Gastrocnemius medialis (tissue), 4 donors: ENCODE measurements at regions of chr4 and their contacts with region 1.

Region 1: GRCh38 chr4:140252742-140253555 is 99.0 kb upstream of the MAML3 start:
- DNase-seq: peak; percentile 29 to 39
- ATAC-seq: peak; percentile 66 to 72
- H3K4me3 ChIP-seq: peak overlapping the region; percentile 58 to 75 (median 66)
- H3K27ac ChIP-seq: peak overlapping the region; percentile 75 to 86 (median 80)
- H3K4me1 ChIP-seq: peaks cover 13 to 23% of the 10 kb centered on the region in 2 donors
- H3K27me3 ChIP-seq: no peaks in the 10 kb centered on the region
- CTCF ChIP-seq: peak; percentile 69 to 99 (median 87)
- POLR2A ChIP-seq: no peak

Region 2: DNA sequence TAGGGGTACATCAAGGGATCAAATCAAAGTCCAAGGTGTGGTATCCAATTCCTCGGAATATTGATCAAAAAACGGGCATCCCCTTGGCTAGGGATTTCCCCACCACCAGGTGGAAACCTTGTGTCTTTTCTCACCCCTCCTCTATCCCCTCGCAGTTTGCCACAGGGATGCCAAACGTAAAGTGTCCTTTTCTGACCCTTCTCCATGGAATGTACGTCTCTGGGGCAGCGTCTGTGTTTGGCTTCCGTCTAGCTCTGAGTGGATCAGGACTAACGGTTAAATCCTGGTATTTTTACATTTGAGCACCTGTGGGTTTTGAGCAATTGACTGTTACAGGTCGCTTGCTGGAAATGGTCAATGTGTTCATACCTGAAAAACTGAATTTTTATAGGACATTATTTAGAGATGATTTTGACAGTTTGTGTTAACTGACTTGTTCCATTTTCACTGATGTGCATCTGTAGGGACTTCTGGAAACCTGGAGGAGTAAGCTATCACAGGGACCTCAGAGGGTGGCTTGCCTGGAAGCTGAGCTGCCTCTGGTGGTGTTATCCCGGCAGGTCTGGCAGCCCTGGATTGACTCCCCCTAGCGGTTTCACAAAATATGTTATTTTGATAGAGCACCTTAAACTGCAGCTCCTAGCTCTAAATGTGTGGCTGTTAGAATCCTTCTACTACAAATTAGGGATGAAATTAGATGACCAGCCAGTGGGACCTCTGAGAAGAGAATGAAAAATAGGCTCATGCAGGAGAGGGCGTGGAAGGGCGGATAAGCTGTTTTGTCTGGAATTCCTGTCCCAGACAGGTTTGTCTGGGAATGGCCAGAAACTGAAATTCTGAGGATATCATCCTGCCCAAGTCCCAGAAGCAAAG is 596.1 kb before region 1 on chr4:
- in situ Hi-C with region 1: no loop called
- intact Hi-C with region 1: loop called (anchors 5 kb)
- DNase-seq: peak in 1 of 2 donors; percentile 28
- ATAC-seq: peak; percentile 63 to 82
- H3K4me3 ChIP-seq: no peak overlapping the region
- H3K27ac ChIP-seq: peak overlapping the region in 2 of 4 donors; percentile 36 to 58
- H3K4me1 ChIP-seq: peaks cover 9 to 15% of the 10 kb centered on the region in 2 donors
- H3K27me3 ChIP-seq: no peaks in the 10 kb centered on the region
- CTCF ChIP-seq: peak; percentile 63 to 84 (median 66)
- POLR2A ChIP-seq: no peak

Region 3: DNA sequence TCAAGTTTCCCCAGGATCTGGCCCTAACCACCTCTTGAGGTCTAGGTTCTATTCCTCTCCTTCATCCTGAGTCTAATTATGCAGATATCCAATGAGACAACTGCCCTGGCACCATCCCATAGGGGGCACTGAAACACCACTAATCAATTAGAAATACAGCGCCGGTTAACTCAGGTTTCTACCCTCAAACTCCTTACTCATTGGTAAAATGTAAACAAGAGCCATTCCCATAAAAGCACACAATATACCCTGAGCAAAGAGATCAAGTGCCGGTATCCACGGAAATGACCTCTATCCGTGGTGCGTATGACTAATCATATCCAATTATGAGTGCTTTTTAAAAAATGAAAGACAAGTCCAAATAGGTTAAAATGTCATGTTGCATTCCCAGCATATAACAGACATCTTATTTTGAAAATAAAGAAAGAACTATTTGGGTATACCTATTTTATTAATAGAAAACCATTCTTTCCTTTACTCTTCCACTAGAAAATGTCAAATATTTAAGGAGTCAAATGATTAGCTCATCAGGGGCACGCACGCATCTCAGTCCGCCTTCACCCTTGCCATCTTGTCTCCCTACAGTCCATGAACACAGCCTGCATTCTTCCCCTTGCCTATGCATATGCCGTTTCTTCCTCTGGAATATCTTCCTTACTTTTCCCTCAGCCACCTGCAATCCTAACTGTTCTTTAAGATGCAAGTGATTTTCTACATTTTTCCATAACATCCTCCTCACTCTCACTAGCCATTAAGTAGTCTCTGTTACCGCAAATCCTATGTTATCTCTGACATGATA is 240.1 kb before region 1 on chr4:
- in situ Hi-C with region 1: loop called in 3 of 4 experiments (anchors 10 to 25 kb)
- intact Hi-C with region 1: loop called (anchors 1 kb)
- DNase-seq: peak in 1 of 2 donors; percentile 49
- ATAC-seq: peak; percentile 90 to 94
- H3K4me3 ChIP-seq: no peak overlapping the region
- H3K27ac ChIP-seq: no peak overlapping the region
- H3K4me1 ChIP-seq: peaks cover 0 to 8% of the 10 kb centered on the region in 2 donors
- H3K27me3 ChIP-seq: no peaks in the 10 kb centered on the region
- CTCF ChIP-seq: peak; percentile 31 to 57 (median 49)
- POLR2A ChIP-seq: no peak

Region 4: DNA sequence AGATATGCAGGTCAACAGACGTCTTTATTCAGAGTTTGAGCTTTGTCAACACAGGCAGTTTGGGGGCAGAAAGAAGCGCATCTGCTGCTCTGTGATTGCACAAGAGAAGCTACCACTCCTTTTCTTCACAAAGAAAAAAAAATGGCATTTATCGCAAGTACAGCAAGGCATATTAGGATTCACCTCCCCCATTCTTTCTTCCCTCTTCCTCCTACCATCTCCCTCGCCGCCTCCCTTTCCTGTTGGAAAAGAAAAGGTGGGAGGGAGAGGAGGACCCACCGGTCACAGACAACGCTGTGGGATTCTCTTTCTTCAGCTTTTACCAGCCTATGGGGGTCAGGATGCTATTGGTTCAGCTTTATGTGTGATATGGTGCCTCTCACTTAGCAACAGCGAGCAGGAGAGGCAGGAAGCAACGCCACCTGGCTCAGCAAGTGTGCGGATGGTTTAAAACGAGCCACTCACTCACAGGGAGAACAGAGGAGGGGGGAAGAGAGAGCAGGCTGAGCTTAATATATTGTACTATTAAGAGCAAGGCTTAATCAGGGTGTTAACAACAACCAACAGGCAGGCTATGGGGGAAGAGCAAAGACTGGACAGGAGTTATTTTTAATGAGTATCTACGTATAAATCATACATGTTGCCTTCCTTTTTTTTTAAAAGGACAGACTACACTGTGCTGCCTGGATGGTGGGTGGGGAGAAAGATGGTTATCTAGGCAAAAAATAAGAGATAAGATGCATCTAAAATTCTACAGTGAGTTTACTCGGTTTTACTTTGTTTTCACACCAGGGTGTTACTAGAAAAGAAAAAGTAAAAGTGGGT is 203.7 kb before region 1 on chr4:
- in situ Hi-C with region 1: loop called in 1 of 4 experiments (anchors 10 kb)
- intact Hi-C with region 1: loop called (anchors 2 kb)
- DNase-seq: peak in 1 of 2 donors; percentile 17
- ATAC-seq: peak; percentile 39 to 40
- H3K4me3 ChIP-seq: peak overlapping the region; percentile 35 to 46 (median 44)
- H3K27ac ChIP-seq: peak overlapping the region; percentile 21 to 71 (median 50)
- H3K4me1 ChIP-seq: peaks cover 24 to 26% of the 10 kb centered on the region in 2 donors
- H3K27me3 ChIP-seq: no peaks in the 10 kb centered on the region
- CTCF ChIP-seq: no peak
- POLR2A ChIP-seq: no peak

Region 5: DNA sequence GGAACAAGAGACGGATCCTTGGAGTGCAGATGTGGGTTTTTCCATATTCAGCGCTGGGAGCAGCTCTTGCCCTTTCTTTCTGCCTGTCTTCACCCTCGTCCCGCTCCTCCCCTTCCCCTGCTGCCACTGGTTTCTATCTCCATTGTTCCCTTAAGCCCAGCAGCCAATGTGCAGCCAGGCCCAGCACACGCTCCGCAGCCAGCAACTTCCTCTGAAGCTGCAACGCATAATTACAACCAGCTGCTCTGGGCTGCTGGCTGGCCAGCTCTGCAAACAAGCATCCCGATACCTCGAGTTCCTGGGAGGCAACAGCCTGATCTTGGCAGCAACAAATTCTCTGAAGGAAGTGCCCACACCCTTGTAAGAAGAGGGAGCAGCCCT is 15.4 kb before region 1 on chr4:
- in situ Hi-C with region 1: no loop called
- intact Hi-C with region 1: loop called (anchors 2 kb)
- DNase-seq: peak; percentile 53 to 70
- ATAC-seq: peak; percentile 42 to 49
- H3K4me3 ChIP-seq: peak overlapping the region; percentile 25 to 45 (median 39)
- H3K27ac ChIP-seq: peak overlapping the region; percentile 84 to 90 (median 88)
- H3K4me1 ChIP-seq: peaks cover 38 to 48% of the 10 kb centered on the region in 2 donors
- H3K27me3 ChIP-seq: no peaks in the 10 kb centered on the region
- CTCF ChIP-seq: no peak
- POLR2A ChIP-seq: no peak

Region 6: DNA sequence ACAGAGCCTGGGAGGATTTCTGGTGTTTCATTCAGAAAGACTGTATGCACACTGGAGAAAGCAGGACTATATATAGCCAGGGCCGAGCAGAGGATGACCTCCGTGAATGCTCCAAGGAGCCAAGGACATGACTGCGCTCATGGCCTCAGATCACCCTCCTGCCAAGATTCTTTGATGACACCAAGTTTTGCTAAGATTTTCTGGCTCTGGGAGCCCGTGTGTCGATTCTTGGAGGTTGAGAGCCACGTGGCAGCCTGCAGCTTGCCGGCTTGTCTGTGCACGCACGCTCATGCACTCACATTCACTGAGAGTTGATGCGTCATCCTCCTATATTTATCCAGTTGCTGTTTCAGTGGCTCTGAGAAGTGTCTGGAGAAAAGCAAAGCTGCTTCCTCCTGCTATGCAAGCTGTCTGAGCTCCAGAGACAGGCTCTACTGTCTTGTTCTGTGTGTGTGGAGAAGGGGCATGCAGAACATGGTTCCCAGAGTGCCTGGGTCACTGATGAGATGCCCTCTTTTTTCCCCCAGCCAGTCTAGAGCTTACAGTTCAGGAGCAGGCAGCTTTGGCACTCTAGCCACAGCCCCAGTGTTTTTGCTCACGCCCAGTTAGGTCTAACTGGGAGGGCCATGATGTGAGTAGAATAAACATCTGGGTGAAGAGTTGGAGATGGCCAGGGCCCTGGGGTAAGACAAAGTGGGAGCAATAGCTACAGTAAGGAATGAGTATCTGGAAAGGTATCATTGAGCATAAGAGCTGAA is 55.6 kb after region 1 on chr4:
- in situ Hi-C with region 1: no loop called
- intact Hi-C with region 1: loop called (anchors 5 kb)
- DNase-seq: peak; percentile 80 to 89
- ATAC-seq: peak; percentile 97 to 98
- H3K4me3 ChIP-seq: peak overlapping the region in 3 of 4 donors; percentile 15 to 38 (median 29)
- H3K27ac ChIP-seq: peak overlapping the region; percentile 82 to 88 (median 87)
- H3K4me1 ChIP-seq: peaks cover 22 to 25% of the 10 kb centered on the region in 2 donors
- H3K27me3 ChIP-seq: no peaks in the 10 kb centered on the region
- CTCF ChIP-seq: no peak
- POLR2A ChIP-seq: no peak

Region 7: DNA sequence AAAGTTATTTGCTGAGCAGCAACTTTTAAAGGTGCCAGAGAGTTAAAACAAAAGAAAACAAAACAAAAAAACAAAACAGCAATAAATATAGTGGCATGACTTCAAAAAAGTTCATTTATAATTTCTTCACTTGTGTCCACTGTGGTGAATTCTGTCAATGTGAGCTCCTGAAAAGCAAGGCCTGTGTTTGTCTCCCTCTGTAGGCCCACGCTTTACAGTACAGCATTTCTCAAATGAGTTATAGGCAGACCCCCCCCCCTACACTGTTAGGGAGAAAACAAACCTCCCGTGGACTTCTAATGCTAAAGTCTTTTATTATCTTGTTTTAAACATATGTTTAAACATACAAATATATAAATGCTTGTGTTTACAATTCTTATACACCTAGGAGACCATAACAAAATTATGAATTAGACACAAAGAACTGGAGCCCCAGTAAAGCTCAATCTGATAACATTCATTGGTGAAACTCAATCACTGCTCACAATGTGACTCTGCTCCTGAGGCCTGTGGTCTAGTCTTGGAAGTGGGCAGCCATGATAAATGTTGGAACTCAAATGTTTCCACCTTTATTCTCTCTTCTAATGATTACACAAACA is 73.5 kb after region 1 on chr4:
- in situ Hi-C with region 1: no loop called
- intact Hi-C with region 1: loop called (anchors 5 kb)
- DNase-seq: no peak
- ATAC-seq: peak; percentile 63 to 68
- H3K4me3 ChIP-seq: no peak overlapping the region
- H3K27ac ChIP-seq: no peak overlapping the region
- H3K4me1 ChIP-seq: no peaks in the 10 kb centered on the region
- H3K27me3 ChIP-seq: no peaks in the 10 kb centered on the region
- CTCF ChIP-seq: peak in 4 of 5 experiments; percentile 41 to 61 (median 52)
- POLR2A ChIP-seq: no peak